ENCODE measurements at regions of chr11 and their contacts with region 1.

Region 1: DNA sequence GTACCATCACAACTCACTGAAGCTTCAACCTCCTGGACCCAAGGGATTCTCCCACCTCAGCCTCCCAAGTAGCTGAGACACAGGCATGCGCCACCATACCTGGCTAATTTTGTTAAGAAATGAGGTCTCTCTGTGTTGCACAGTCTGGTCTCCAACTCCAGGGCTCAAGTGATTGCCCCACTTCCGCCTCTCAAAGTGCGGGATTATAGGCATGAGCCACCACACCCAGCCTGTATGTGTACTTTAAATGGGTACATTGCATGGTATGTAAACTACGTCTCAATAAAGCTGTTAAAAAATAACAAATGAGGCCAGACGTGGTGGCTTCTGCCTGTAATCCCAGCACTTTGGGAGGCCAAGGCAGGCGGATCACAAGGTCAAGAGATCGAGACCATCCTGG is 36.2 kb upstream of the DDX6 start:
- DNase-seq: no peak
- ATAC-seq: no peak
- H3K4me3 ChIP-seq: no peak overlapping the region
- H3K4me3 Mint-ChIP-seq: no peak overlapping the region
- H3K27ac ChIP-seq: no peak overlapping the region
- H3K27ac Mint-ChIP-seq: no peak overlapping the region
- H3K4me1 ChIP-seq: peaks cover 28 to 31% of the 10 kb centered on the region in 2 donors
- H3K4me1 Mint-ChIP-seq: peaks cover 25% of the 10 kb centered on the region
- H3K27me3 ChIP-seq: no peaks in the 10 kb centered on the region
- H3K27me3 Mint-ChIP-seq: no peaks in the 10 kb centered on the region
- CTCF ChIP-seq: no peak

Region 2: DNA sequence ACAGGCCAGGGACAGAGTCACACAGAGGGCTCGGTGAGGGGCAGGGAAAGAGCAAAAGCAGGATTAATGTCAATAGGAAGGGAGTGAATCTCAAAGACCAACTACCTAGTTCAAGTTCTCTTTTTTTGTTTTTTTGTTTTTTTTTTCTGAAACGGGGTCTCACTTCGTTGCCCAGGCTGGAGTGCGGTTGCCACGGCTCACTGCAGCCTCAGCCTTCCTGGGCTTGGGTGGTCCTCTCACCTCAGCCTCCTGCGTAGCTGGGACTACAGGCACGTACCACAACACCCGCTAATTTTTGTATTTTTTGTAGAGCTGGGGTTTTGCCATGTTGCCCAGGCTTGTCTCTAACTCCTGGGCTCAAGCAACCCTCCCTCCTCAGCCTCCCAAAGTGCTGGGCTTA is 108.3 kb after region 1 on chr11:
- CTCF ChIA-PET with region 1: interaction called, 3 read pairs
- POLR2A ChIA-PET with region 1: interaction called, 12 read pairs
- intact Hi-C with region 1: no loop called
- DNase-seq: peak; percentile 72
- ATAC-seq: peak; percentile 80
- H3K4me3 ChIP-seq: no peak overlapping the region
- H3K4me3 Mint-ChIP-seq: peak overlapping the region; percentile 56
- H3K27ac ChIP-seq: peak overlapping the region in 1 of 2 donors; percentile 23
- H3K27ac Mint-ChIP-seq: peak overlapping the region; percentile 69
- H3K4me1 ChIP-seq: peaks cover 33 to 40% of the 10 kb centered on the region in 2 donors
- H3K4me1 Mint-ChIP-seq: peaks cover 44% of the 10 kb centered on the region
- H3K27me3 ChIP-seq: peaks cover 0 to 3% (median 0%) of the 10 kb centered on the region in 4 experiments
- H3K27me3 Mint-ChIP-seq: no peaks in the 10 kb centered on the region
- CTCF ChIP-seq: no peak

Region 3: GRCh38 chr11:119134389-119134978 is 307.4 kb after region 1 on chr11:
- CTCF ChIA-PET with region 1: no interaction called
- POLR2A ChIA-PET with region 1: no interaction called
- intact Hi-C with region 1: no loop called
- DNase-seq: no peak
- ATAC-seq: no peak
- H3K4me3 ChIP-seq: no peak overlapping the region
- H3K4me3 Mint-ChIP-seq: no peak overlapping the region
- H3K27ac ChIP-seq: no peak overlapping the region
- H3K27ac Mint-ChIP-seq: no peak overlapping the region
- H3K4me1 ChIP-seq: no peaks in the 10 kb centered on the region
- H3K4me1 Mint-ChIP-seq: no peaks in the 10 kb centered on the region
- H3K27me3 ChIP-seq: no peaks in the 10 kb centered on the region
- H3K27me3 Mint-ChIP-seq: peaks cover under 1% of the 10 kb centered on the region
- CTCF ChIP-seq: peak; percentile 43

Region 4: DNA sequence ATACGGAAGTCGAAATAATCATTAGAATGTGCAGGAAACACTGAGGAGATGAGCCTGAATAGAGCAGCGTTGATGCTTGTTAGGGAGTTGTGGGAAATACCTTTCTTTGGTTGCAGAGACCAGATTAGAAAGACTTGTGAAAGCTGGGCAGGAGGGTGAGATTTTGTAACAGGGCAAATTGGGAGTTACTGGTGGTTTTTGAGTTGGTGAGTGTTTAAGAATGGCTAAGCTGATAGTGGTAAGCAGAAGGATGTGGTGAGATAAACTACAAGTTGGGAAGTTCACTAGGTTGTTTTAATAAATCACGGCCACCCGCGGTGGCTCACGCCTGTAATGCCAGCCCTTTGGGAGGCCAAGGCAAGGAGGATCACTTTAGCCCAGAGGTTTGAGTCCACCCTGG is 455.4 kb after region 1 on chr11:
- CTCF ChIA-PET with region 1: no interaction called
- POLR2A ChIA-PET with region 1: no interaction called
- intact Hi-C with region 1: no loop called
- DNase-seq: no peak
- ATAC-seq: no peak
- H3K4me3 ChIP-seq: no peak overlapping the region
- H3K4me3 Mint-ChIP-seq: no peak overlapping the region
- H3K27ac ChIP-seq: no peak overlapping the region
- H3K27ac Mint-ChIP-seq: no peak overlapping the region
- H3K4me1 ChIP-seq: peaks cover 3 to 5% of the 10 kb centered on the region in 2 donors
- H3K4me1 Mint-ChIP-seq: peaks cover 6% of the 10 kb centered on the region
- H3K27me3 ChIP-seq: no peaks in the 10 kb centered on the region
- H3K27me3 Mint-ChIP-seq: no peaks in the 10 kb centered on the region
- CTCF ChIP-seq: no peak